Activated CD8-positive, alpha-beta memory T cell treated with anti-CD3 and anti-CD28 coated beads, Interleukin-2, amount 10 ng/mL, durations not matched to agents 7 days and 5 days (primary cell): ENCODE measurements at regions of chr12 and their contacts with region 1.

Region 1: DNA sequence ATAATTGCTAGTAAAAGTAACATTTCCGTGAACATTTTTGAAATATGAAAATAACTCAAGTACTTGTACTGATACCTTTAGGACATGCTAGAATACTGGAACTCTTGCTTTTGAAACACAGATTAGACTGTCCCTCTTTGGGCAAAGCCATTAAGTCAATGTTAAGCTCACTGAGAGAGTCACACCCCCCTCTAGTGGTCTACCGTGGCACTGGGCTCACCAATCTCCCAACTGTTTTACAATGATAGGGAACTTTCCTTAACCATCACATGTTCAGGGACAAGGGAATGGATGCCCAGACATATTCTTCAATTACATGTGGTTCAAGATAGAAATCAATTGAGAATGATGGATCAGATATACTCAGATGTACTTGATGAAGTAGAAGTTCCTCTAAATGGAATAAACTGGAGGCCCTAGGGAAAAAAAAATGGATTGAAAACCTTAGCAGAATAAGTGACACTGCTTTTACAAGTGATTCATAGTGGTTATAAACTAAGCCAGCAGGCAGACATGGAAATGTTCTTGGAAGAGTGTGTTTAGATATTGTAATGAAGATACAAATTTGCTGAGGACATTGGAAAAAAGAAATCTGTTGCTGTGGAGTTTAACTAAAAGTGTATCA is 17.8 kb downstream of the NANOG start:
- DNase-seq: peak; percentile 71
- ATAC-seq: peak; percentile 55
- H3K4me3 Mint-ChIP-seq: no peak overlapping the region
- H3K27ac Mint-ChIP-seq: no peak overlapping the region
- H3K4me1 Mint-ChIP-seq: no peaks in the 10 kb centered on the region
- H3K27me3 Mint-ChIP-seq: peaks cover 2% of the 10 kb centered on the region

Region 2: GRCh38 chr12:7642876-7643309 is 164.1 kb before region 1 on chr12:
- CTCF ChIA-PET with region 1: interaction called, 27 read pairs
- DNase-seq: peak; percentile 56
- ATAC-seq: no peak
- H3K4me3 Mint-ChIP-seq: no peak overlapping the region
- H3K27ac Mint-ChIP-seq: no peak overlapping the region
- H3K4me1 Mint-ChIP-seq: peaks cover 25% of the 10 kb centered on the region
- H3K27me3 Mint-ChIP-seq: peaks cover 11% of the 10 kb centered on the region

Region 3: DNA sequence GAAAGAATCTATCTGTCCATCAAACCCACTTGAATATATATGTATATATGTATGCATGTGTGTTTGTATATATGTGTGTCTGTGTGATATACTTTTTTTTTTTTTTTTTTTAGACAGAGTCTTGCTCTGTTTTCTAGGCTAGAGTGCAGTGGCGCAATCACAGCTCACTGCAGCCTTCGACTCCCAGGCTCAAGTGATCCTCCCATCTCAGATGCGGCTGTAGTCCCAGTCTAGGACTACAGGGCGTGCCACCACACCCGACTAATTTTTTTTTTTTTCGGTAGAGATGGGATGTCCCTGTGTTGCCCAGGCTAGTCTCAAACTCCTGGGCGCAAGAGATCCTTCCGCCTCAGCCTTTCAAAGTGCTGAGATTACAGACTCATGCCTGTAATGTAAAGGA is 128.2 kb before region 1 on chr12:
- CTCF ChIA-PET with region 1: interaction called, 47 read pairs
- DNase-seq: no peak
- ATAC-seq: no peak
- H3K4me3 Mint-ChIP-seq: no peak overlapping the region
- H3K27ac Mint-ChIP-seq: no peak overlapping the region
- H3K4me1 Mint-ChIP-seq: peaks cover 5% of the 10 kb centered on the region
- H3K27me3 Mint-ChIP-seq: peaks cover 7% of the 10 kb centered on the region

Region 4: DNA sequence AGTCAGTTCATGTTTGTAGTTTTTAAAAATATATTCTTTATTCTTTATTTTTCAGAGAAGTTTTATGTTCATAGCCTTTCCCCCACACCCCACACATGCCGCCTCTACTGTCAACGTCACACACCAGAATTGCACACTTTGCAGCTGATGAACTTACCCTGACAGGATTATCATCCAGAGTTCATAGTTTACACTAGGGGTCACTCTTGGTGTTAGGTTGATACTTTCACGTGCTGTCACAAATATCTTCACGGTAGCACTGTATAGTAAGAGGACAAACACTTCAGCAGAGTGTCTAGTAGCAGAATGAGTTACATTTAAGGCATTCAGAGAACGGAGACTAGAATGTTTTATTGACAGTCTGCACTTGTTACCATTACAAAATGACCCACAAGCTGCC is 90.6 kb before region 1 on chr12:
- CTCF ChIA-PET with region 1: interaction called, 12 read pairs
- DNase-seq: no peak
- ATAC-seq: peak; percentile 49
- H3K4me3 Mint-ChIP-seq: no peak overlapping the region
- H3K27ac Mint-ChIP-seq: no peak overlapping the region
- H3K4me1 Mint-ChIP-seq: no peaks in the 10 kb centered on the region
- H3K27me3 Mint-ChIP-seq: peaks cover 12% of the 10 kb centered on the region

Region 5: DNA sequence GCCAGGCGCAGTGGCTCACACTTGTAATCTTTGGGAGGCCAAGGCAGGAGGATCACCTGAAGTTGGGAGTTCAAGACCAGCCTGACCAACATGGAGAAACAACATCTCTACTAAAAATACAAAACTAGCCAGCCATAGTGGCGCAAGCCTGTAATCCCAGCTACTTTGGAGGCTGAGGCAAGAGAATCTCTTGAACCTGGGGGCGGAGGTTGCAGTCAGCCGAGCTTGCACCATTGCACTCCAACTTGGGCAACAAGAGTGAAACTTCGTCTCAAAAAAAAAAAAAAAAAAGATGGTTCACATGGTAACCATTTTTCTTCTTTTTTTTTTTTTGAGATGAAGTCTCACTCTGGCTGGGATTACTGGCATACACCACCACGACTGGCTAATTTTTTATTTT is 30.4 kb after region 1 on chr12:
- CTCF ChIA-PET with region 1: no interaction called
- DNase-seq: no peak
- ATAC-seq: no peak
- H3K4me3 Mint-ChIP-seq: no peak overlapping the region
- H3K27ac Mint-ChIP-seq: no peak overlapping the region
- H3K4me1 Mint-ChIP-seq: no peaks in the 10 kb centered on the region
- H3K27me3 Mint-ChIP-seq: peaks cover 9% of the 10 kb centered on the region

Region 6: GRCh38 chr12:7853557-7853956 is 46.6 kb after region 1 on chr12:
- CTCF ChIA-PET with region 1: no interaction called
- DNase-seq: no peak
- ATAC-seq: no peak
- H3K4me3 Mint-ChIP-seq: no peak overlapping the region
- H3K27ac Mint-ChIP-seq: no peak overlapping the region
- H3K4me1 Mint-ChIP-seq: no peaks in the 10 kb centered on the region
- H3K27me3 Mint-ChIP-seq: peaks cover 38% of the 10 kb centered on the region